ENCODE measurements at regions of chr12 and their contacts with region 1.

Region 1: GRCh38 chr12:53441040-53441833 is at the start of gene PRR13:
- DNase-seq: peak; percentile 99
- ATAC-seq: peak; percentile 98
- H3K4me3 ChIP-seq: peak within 1 kb of the TSS; percentile 96 to 98
- H3K27ac ChIP-seq: peak within 1 kb of the TSS; percentile 82
- H3K4me1 ChIP-seq: peaks cover 10 to 30% of the 10 kb centered on the region in 2 experiments; a peak in 3 of 4 replicates
- H3K27me3 ChIP-seq: no peaks in the 10 kb centered on the region
- CTCF ChIP-seq: no peak
- POLR2A ChIP-seq: peak; percentile 95
- RAD21 ChIP-seq: no peak
- total RNA-seq, gene PRR13: 216 TPM

Region 2: DNA sequence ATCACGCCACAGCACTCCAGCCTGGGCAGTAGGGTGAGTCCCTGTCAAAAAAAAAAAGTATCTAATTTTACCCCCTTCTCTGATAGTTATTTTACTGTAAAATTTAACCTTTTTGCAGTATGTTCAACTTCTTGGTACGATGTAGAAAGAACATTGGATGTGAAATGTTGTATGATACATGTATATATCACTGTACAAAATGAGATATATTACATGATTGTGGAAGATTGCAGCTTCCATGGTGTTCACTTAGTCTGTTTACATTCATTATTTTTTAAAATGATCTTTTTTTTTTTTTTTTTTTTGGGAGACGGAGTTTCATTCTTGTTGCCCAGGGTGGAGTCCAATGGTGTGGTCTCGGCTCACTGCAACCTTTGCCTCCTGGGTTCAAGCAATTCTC is 52.3 kb before region 1 on chr12:
- CTCF ChIA-PET with region 1: no interaction called
- POLR2A ChIA-PET with region 1: no interaction called
- RAD21 ChIA-PET with region 1: no interaction called
- intact Hi-C with region 1: no loop called
- DNase-seq: no peak
- ATAC-seq: no peak
- H3K4me3 ChIP-seq: no peak overlapping the region
- H3K27ac ChIP-seq: no peak overlapping the region
- H3K4me1 ChIP-seq: no peaks in the 10 kb centered on the region
- H3K27me3 ChIP-seq: no peaks in the 10 kb centered on the region
- CTCF ChIP-seq: no peak
- POLR2A ChIP-seq: no peak
- RAD21 ChIP-seq: no peak

Region 3: DNA sequence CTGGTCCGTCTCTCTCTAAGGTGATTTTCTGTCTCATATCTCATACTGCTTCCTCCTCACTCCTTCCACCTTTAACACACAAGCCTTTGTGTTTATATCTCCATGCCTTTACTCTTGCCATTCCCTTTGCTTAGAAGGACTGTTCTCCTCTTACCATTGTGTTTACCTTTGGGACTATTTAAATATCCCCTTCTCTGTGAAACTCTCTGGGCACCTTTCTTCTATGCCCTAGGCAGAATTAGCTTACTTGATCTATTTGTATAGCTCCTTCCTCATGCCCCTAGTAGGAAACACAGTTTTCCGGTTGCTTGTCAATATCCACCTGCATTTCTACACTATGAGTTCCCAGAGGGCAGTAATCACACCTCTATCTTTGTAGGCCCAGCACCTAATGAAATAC is 21.5 kb before region 1 on chr12:
- CTCF ChIA-PET with region 1: interaction called, 14 read pairs
- POLR2A ChIA-PET with region 1: interaction called, 12 read pairs
- RAD21 ChIA-PET with region 1: no interaction called
- intact Hi-C with region 1: no loop called
- DNase-seq: no peak
- ATAC-seq: no peak
- H3K4me3 ChIP-seq: no peak overlapping the region; a peak in 1 of 4 replicates
- H3K27ac ChIP-seq: peak overlapping the region; percentile 95; the same call in 1 of the 2 replicates
- H3K4me1 ChIP-seq: peaks cover 16 to 26% of the 10 kb centered on the region in 2 experiments
- H3K27me3 ChIP-seq: no peaks in the 10 kb centered on the region
- CTCF ChIP-seq: no peak
- POLR2A ChIP-seq: no peak
- RAD21 ChIP-seq: no peak

Region 4: DNA sequence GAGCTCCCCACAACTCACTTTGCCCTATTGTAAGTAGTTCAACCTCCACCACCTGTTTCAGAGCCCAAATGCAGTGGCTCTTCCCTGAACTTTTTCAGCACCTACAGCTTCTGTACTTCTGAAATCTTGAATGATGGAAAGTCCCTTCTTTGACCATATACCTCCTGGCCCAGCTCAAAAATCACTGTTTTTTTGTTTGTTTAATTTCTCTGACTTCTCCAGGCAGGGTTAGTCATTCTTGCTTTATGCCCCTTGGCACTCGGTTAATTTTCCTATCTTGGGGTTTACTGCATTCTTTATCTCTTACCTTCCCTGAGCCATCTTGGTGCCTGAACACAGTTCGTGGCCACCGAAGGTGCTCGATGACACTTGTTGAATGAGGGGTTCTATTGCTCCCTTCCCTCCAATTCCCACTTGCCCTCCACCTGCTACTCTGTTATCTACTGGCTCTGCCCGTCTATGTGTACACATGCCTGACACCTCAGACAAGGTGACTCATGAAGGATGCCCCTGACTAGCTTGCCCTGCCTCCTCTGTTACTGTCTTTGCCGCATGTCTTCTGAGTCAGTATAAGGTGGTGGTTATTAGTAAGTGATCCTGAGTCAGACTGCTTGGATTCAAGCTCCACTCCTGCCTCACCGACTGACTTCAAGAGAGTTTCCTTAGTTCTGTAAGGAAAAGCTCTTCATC is 13.2 kb before region 1 on chr12:
- CTCF ChIA-PET with region 1: no interaction called
- POLR2A ChIA-PET with region 1: interaction called, 13 read pairs
- RAD21 ChIA-PET with region 1: no interaction called
- intact Hi-C with region 1: no loop called
- DNase-seq: peak; percentile 80
- ATAC-seq: peak; percentile 96
- H3K4me3 ChIP-seq: no peak overlapping the region
- H3K27ac ChIP-seq: no peak overlapping the region
- H3K4me1 ChIP-seq: peaks cover 5 to 20% of the 10 kb centered on the region in 2 experiments
- H3K27me3 ChIP-seq: no peaks in the 10 kb centered on the region
- CTCF ChIP-seq: no peak
- POLR2A ChIP-seq: no peak
- RAD21 ChIP-seq: no peak

Region 5: GRCh38 chr12:53451661-53452158 is 10.5 kb after region 1 on chr12 and contains the start of gene PCBP2:
- CTCF ChIA-PET with region 1: interaction called, 5 read pairs
- POLR2A ChIA-PET with region 1: interaction called, 21 read pairs
- RAD21 ChIA-PET with region 1: no interaction called
- intact Hi-C with region 1: no loop called
- DNase-seq: peak; percentile 99
- ATAC-seq: peak; percentile 92
- H3K4me3 ChIP-seq: peak within 1 kb of the TSS; percentile 76 to 79
- H3K27ac ChIP-seq: peak within 1 kb of the TSS; percentile 96
- H3K4me1 ChIP-seq: peaks cover 0 to 14% of the 10 kb centered on the region in 2 experiments; a peak in 3 of 4 replicates
- H3K27me3 ChIP-seq: no peaks in the 10 kb centered on the region
- CTCF ChIP-seq: peak; percentile 72 to 88 (median 84)
- POLR2A ChIP-seq: no peak
- RAD21 ChIP-seq: 0 out of 2 replicates have a peak, but pooled peaks have one; percentile 4
- total RNA-seq, gene PCBP2: 856 TPM

Region 6: DNA sequence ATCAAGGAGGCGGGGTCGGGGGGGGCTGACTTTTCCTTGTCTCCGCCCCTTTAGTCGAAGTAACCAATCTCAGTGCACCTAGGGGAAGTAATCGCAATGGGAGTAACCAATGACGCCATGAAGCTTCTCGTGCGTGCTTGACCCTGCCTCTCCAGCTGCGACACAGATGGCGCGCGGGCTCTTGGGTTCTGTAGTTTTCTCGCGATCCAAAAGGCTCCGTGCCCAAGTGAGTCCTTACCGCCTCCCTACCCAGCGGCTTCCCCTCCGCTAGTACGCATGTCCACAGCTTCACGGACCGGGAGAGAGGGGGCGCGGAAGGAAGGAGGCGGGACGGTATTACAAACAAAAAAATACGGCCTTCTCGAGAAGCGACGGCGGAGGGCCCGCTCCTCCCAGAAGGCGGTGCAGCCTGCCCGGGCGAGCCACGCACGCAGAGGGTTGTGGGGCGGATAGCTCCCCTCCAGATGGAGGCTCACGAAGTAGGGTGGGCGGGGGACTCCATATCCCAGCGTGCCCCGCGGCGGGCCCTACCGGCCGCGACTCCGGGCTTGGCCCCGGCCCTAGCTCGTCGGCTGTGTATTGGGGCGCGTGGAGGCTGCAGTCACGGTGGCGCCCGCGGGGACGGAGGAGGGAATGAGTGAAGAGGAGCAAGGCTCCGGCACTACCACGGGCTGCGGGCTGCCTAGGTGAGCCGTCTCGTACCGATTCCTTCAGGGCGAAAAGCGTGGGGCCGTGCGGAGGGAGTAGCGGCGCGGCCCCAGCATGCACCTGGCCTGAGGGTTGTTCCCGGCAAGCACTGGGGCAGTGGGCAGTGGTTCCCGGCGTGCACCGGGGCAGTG is 59.8 kb after region 1 on chr12 and contains the start of gene TARBP2:
- CTCF ChIA-PET with region 1: no interaction called
- POLR2A ChIA-PET with region 1: interaction called, 10 read pairs
- RAD21 ChIA-PET with region 1: no interaction called
- intact Hi-C with region 1: no loop called
- DNase-seq: peak; percentile 99
- ATAC-seq: peak; percentile 78
- H3K4me3 ChIP-seq: peak within 1 kb of the TSS; percentile 75 to 87
- H3K27ac ChIP-seq: peak within 1 kb of the TSS; percentile 90
- H3K4me1 ChIP-seq: peaks cover 13 to 39% of the 10 kb centered on the region in 2 experiments
- H3K27me3 ChIP-seq: no peaks in the 10 kb centered on the region
- CTCF ChIP-seq: no peak
- POLR2A ChIP-seq: peak; percentile 76
- RAD21 ChIP-seq: no peak
- total RNA-seq, gene TARBP2: 40.1 TPM